ENCODE measurements at regions of chr12 and their contacts with region 1.

Region 1: GRCh38 chr12:4849115-4849541 is 60.6 kb upstream of the KCNA1 start:
- DNase-seq: peak in 9 of 35 experiments; percentile 14 to 63 (median 31)
- ATAC-seq: no peak
- H3K4me3 ChIP-seq: no peak overlapping the region
- H3K4me3 Mint-ChIP-seq: no peak overlapping the region
- H3K27ac ChIP-seq: no peak overlapping the region
- H3K27ac Mint-ChIP-seq: no peak overlapping the region
- H3K4me1 ChIP-seq: no peaks in the 10 kb centered on the region
- H3K4me1 Mint-ChIP-seq: peaks cover 0 to 3% (median 0%) of the 10 kb centered on the region in 3 donors
- H3K27me3 ChIP-seq: peaks cover 0 to 3% of the 10 kb centered on the region in 2 experiments
- H3K27me3 Mint-ChIP-seq: peaks cover 0 to 6% of the 10 kb centered on the region in 2 donors

Region 2: GRCh38 chr12:3421191-3421978 is 1427.7 kb before region 1 on chr12:
- CTCF ChIA-PET with region 1: no interaction called
- POLR2A ChIA-PET with region 1: no interaction called
- DNase-seq: no peak
- ATAC-seq: no peak
- H3K4me3 ChIP-seq: no peak overlapping the region
- H3K4me3 Mint-ChIP-seq: no peak overlapping the region
- H3K27ac ChIP-seq: no peak overlapping the region
- H3K27ac Mint-ChIP-seq: no peak overlapping the region
- H3K4me1 ChIP-seq: no peaks in the 10 kb centered on the region
- H3K4me1 Mint-ChIP-seq: no peaks in the 10 kb centered on the region
- H3K27me3 ChIP-seq: peaks cover 0 to 18% of the 10 kb centered on the region in 2 experiments
- H3K27me3 Mint-ChIP-seq: peaks cover 28% of the 10 kb centered on the region in 2 donors

Region 3: DNA sequence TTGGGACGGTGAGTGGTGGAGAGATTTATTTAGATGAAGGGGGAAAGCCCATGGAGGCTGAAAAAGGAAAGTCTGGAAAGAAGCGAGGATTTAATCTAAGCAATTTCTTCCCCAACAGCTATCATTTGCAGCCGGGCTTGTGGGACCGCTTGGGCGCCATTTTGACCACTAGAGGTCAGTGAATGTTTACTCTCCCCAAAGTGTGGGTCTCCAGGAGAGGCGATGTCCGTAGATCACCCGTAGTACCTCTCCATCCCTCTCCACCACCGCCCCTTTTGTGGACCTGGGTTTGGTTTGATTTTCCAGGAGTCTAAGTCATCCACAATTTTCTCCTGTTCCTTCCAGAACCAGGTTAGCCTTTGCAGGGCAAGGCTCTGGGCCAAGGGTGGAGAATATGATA is 884.7 kb before region 1 on chr12:
- CTCF ChIA-PET with region 1: no interaction called
- POLR2A ChIA-PET with region 1: interaction called in 1 of 2 experiments, 11 read pairs
- DNase-seq: no peak
- ATAC-seq: no peak
- H3K4me3 ChIP-seq: no peak overlapping the region
- H3K4me3 Mint-ChIP-seq: no peak overlapping the region
- H3K27ac ChIP-seq: no peak overlapping the region
- H3K27ac Mint-ChIP-seq: peak overlapping the region; percentile 31 to 49
- H3K4me1 ChIP-seq: peaks cover 18 to 26% of the 10 kb centered on the region in 2 experiments
- H3K4me1 Mint-ChIP-seq: peaks cover 24 to 30% (median 29%) of the 10 kb centered on the region in 3 donors
- H3K27me3 ChIP-seq: peaks cover 0 to 5% of the 10 kb centered on the region in 2 experiments
- H3K27me3 Mint-ChIP-seq: no peaks in the 10 kb centered on the region

Region 4: DNA sequence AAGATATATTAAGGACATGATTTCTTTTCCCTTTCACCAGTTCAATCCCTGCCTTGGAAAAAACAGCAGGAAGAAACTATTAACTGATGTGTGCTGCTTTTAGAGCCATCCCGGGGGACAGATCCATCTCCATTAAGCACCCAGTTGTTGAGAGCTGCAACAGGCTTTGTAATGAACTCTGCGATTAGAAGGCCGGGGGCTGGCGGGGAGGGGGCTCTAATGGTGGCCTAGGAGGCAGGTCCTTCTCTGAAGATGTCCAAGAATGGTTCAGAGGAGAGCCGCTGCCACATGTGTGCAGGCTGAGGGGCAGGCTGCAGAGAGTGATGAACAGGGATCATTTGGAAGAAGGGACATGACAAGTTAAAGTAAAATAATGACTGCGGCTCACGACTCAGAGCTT is 61.2 kb before region 1 on chr12:
- CTCF ChIA-PET with region 1: no interaction called
- POLR2A ChIA-PET with region 1: no interaction called
- DNase-seq: no peak
- ATAC-seq: no peak
- H3K4me3 ChIP-seq: no peak overlapping the region
- H3K4me3 Mint-ChIP-seq: no peak overlapping the region
- H3K27ac ChIP-seq: no peak overlapping the region
- H3K27ac Mint-ChIP-seq: no peak overlapping the region
- H3K4me1 ChIP-seq: no peaks in the 10 kb centered on the region
- H3K4me1 Mint-ChIP-seq: no peaks in the 10 kb centered on the region
- H3K27me3 ChIP-seq: peaks cover 0 to 10% of the 10 kb centered on the region in 2 experiments
- H3K27me3 Mint-ChIP-seq: peaks cover 3 to 21% of the 10 kb centered on the region in 2 donors

Region 5: DNA sequence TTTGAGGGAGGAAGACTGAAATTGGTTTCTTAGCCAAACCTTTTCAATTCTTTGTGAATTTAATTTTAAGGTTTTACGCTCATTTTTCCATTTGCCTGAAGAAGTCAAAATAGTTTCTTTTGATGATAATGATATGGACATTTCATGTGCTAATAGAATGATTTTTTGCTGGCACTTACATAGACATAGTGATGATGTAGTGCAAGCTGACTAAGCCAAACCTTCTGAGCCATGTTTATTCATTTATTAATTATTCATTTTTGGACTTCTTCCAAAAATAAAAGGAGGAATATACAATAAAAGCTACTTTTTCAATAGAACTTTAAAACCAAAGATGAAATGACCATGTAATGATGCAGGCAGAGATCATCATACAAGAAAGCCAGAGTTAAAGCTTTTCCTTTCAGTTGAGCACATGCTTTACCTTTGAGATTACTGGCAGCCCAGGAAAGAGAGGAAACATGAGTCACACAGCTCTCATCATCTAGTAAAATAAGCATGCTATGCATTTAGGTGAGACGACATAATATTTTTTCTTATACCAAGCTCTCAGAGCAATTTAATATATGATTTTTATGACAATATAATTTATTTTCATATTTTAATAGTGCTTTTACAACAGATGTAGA is 85.4 kb after region 1 on chr12:
- CTCF ChIA-PET with region 1: no interaction called
- POLR2A ChIA-PET with region 1: no interaction called
- DNase-seq: no peak
- ATAC-seq: no peak
- H3K4me3 ChIP-seq: no peak overlapping the region
- H3K4me3 Mint-ChIP-seq: no peak overlapping the region
- H3K27ac ChIP-seq: no peak overlapping the region
- H3K27ac Mint-ChIP-seq: no peak overlapping the region
- H3K4me1 ChIP-seq: no peaks in the 10 kb centered on the region
- H3K4me1 Mint-ChIP-seq: no peaks in the 10 kb centered on the region
- H3K27me3 ChIP-seq: peaks cover 2 to 10% of the 10 kb centered on the region in 2 experiments
- H3K27me3 Mint-ChIP-seq: peaks cover 37 to 44% of the 10 kb centered on the region in 2 donors

Region 6: GRCh38 chr12:5328669-5329517 is 479.8 kb after region 1 on chr12:
- CTCF ChIA-PET with region 1: no interaction called
- POLR2A ChIA-PET with region 1: no interaction called
- DNase-seq: no peak
- ATAC-seq: no peak
- H3K4me3 ChIP-seq: no peak overlapping the region
- H3K4me3 Mint-ChIP-seq: no peak overlapping the region
- H3K27ac ChIP-seq: no peak overlapping the region
- H3K27ac Mint-ChIP-seq: no peak overlapping the region
- H3K4me1 ChIP-seq: no peaks in the 10 kb centered on the region
- H3K4me1 Mint-ChIP-seq: no peaks in the 10 kb centered on the region
- H3K27me3 ChIP-seq: peaks cover 0 to 2% of the 10 kb centered on the region in 2 experiments
- H3K27me3 Mint-ChIP-seq: peaks cover 6 to 14% of the 10 kb centered on the region in 2 donors